Mucosa of descending colon (tissue), 3 donors: ENCODE measurements at regions of chr12 and their contacts with region 1.

Region 1: GRCh38 chr12:52029686-52030085 is 21.6 kb upstream of the NR4A1 start:
- DNase-seq: no peak
- ATAC-seq: no peak
- H3K4me3 ChIP-seq: no peak overlapping the region
- H3K4me1 ChIP-seq: peaks cover 26% of the 10 kb centered on the region
- CTCF ChIP-seq: no peak

Region 2: DNA sequence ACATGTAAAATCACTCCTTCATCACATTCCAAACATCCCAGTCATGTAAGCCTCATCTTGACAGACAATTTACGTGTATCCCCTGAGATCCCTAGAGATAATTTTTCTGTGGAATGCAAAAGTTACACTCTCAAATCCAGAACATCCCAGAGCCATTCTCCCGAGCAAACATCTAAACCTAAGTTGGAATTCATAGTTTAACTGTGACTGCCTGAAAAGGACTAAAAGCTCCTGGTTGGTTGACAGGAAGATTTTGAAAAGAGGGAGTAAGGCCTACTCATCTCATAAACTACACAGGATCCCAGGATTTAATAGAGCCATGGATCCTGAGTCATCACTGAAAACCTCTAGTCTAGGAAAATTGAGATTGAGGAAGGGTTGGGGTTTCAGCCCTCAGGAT is 315.0 kb before region 1 on chr12:
- intact Hi-C with region 1: no loop called
- DNase-seq: no peak
- ATAC-seq: no peak
- H3K4me3 ChIP-seq: no peak overlapping the region
- H3K4me1 ChIP-seq: no peaks in the 10 kb centered on the region
- CTCF ChIP-seq: no peak

Region 3: GRCh38 chr12:52082988-52083637 is 53.4 kb after region 1 on chr12:
- intact Hi-C with region 1: loop called (anchors 5 kb)
- DNase-seq: peak in 2 of 3 donors; percentile 61 to 69
- ATAC-seq: peak; percentile 57
- H3K4me3 ChIP-seq: no peak overlapping the region
- H3K4me1 ChIP-seq: peaks cover 9% of the 10 kb centered on the region
- CTCF ChIP-seq: peak; percentile 90